Sciatic nerve (tissue), 2 donors: ENCODE measurements at regions of chr4 and their contacts with region 1.

Region 1: DNA sequence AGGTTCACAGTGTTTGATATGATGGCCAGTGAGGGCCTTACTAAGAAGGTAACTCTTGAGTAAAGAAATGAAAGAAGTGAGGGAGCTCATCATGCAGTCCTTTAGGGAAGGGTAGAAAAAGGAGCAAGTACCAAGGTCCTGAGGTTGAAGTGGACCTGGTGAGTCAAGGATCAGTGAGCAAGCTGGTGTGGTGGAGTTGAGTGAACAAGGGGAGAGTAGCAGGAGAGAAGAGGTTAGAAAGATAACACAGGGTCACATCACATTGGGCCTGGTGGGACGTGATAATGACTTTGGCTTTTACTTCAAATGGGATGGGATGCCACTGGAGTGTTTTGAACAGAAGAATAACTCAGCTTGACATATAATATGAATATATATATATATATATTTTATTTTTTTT is 44.7 kb downstream of the OSTC start:
- DNase-seq: no peak
- ATAC-seq: no peak

Region 2: GRCh38 chr4:106967892-106968291 is 1727.2 kb before region 1 on chr4:
- intact Hi-C with region 1: loop called (anchors 5 kb)
- DNase-seq: no peak
- ATAC-seq: no peak

Region 3: DNA sequence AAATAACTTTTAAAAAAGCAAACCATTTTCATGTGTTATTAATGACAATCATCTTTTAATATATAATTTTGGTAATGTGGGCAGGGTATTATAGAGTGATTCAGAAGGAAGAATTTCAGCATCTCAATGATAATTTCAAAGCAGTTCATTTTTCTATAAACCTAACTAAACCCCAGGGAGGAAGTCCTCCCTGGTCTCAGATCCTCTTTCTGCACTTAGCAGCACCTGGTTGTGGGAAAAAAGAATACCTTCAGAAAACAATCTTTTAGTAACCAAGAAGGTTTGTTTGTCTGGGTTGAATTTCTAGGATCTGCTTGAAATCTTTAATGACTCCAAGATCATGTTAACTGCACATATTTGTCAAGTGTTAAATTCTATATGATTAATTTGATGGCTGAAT is 1688.8 kb before region 1 on chr4:
- intact Hi-C with region 1: no loop called
- DNase-seq: no peak
- ATAC-seq: no peak